ENCODE measurements at regions of chr5 and their contacts with region 1.

Region 1: DNA sequence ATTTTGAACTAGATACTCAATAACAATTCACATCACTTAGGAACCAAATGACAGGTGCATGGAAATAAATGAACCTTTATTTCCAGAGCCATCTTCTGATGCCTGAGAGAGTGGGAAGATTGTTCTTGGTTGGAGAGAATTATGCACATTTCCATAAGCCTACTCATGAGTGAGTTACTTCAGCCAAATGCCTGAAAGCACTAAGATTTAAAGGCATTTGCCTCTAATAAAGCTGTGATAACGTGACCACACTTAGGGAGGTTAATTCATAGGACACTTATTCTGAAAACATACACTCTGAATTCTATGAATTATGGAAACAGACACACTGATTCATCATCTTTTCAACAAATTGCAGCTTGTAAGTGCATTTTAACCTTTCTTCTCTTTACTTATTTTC is 40.0 kb downstream of the KCTD16 start:
- DNase-seq: no peak
- ATAC-seq: no peak
- H3K4me3 ChIP-seq: no peak overlapping the region
- H3K27ac ChIP-seq: no peak overlapping the region
- H3K4me1 ChIP-seq: no peaks in the 10 kb centered on the region
- H3K27me3 ChIP-seq: peaks cover 24% of the 10 kb centered on the region
- CTCF ChIP-seq: no peak
- POLR2A ChIP-seq: no peak
- RAD21 ChIP-seq: no peak

Region 2: GRCh38 chr5:144378681-144379080 is 168.0 kb after region 1 on chr5:
- CTCF ChIA-PET with region 1: no interaction called
- POLR2A ChIA-PET with region 1: no interaction called
- dilution Hi-C with region 1: no loop called
- in situ Hi-C with region 1: no loop called
- intact Hi-C with region 1: loop called (anchors 5 kb)
- DNase-seq: no peak
- ATAC-seq: no peak
- H3K4me3 ChIP-seq: no peak overlapping the region
- H3K27ac ChIP-seq: no peak overlapping the region
- H3K4me1 ChIP-seq: no peaks in the 10 kb centered on the region
- H3K27me3 ChIP-seq: no peaks in the 10 kb centered on the region
- CTCF ChIP-seq: no peak
- POLR2A ChIP-seq: no peak
- RAD21 ChIP-seq: no peak